ENCODE measurements at regions of chr6 and their contacts with region 1.

Region 1: GRCh38 chr6:138588805-138589434 is 89.6 kb upstream of the NHSL1 start:
- DNase-seq: peak; percentile 39
- H3K4me3 Mint-ChIP-seq: no peak overlapping the region
- H3K27ac Mint-ChIP-seq: no peak overlapping the region
- H3K4me1 Mint-ChIP-seq: peaks cover 27% of the 10 kb centered on the region
- H3K27me3 Mint-ChIP-seq: peaks cover 5% of the 10 kb centered on the region

Region 2: GRCh38 chr6:138115877-138116660 is 472.9 kb before region 1 on chr6:
- intact Hi-C with region 1: loop called (anchors 1 kb)
- DNase-seq: peak; percentile 11
- H3K4me3 Mint-ChIP-seq: no peak overlapping the region
- H3K27ac Mint-ChIP-seq: no peak overlapping the region
- H3K4me1 Mint-ChIP-seq: peaks cover 10% of the 10 kb centered on the region
- H3K27me3 Mint-ChIP-seq: peaks cover 45% of the 10 kb centered on the region

Region 3: DNA sequence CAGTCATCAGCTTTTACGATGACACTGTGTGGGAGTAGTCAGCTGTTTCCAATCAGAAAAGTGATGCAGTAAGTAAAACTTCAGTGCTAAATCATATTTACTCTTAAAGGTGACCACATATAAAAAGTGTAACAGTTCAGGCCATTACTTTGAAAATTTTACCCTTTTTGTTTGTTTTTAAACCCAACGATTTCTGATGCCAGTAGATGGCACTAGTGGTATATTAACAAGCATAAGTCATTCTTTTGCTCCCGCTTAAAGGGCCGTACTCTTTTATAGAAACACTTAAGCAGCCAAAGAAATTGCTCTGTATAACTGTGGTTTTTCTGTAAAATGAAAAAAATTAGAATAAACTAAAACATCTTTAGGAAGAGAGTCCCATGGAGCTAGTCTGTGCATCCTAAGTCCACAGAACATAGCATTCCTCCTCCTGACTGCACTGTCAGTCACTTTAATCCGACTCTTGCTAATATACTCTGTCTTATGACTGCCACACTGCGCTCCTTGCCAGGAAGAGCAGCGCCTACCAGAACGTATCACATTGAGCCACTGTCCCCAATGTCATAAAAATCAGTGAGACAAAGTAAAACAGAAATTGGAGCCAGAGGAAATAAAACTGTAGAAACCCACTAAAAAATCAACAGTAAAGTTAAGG is 159.8 kb before region 1 on chr6:
- intact Hi-C with region 1: loop called (anchors 2 kb)
- DNase-seq: no peak
- H3K4me3 Mint-ChIP-seq: no peak overlapping the region
- H3K27ac Mint-ChIP-seq: no peak overlapping the region
- H3K4me1 Mint-ChIP-seq: peaks cover 5% of the 10 kb centered on the region
- H3K27me3 Mint-ChIP-seq: peaks cover 1% of the 10 kb centered on the region

Region 4: DNA sequence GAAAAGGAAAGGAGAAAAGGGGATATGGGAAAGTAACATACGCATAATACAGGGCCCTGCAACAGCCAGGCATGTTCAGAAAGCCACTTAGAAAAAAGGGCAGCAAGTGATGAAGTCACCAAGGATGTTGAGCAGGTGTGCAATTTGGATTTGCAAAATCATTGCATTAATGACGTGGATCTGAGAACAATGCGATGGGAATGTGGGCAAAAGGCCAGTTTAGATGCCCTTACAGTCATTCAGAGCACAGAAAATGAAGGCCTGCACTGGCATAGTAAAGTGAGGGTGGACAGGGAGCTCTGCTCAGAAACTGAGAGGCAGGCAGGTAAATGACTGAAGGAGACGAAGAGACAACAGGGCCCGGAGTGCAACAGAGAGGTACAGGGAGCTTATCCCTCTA is 34.0 kb after region 1 on chr6:
- intact Hi-C with region 1: no loop called
- DNase-seq: no peak
- H3K4me3 Mint-ChIP-seq: no peak overlapping the region
- H3K27ac Mint-ChIP-seq: no peak overlapping the region
- H3K4me1 Mint-ChIP-seq: no peaks in the 10 kb centered on the region
- H3K27me3 Mint-ChIP-seq: peaks cover 6% of the 10 kb centered on the region

Region 5: GRCh38 chr6:138654715-138655634 is 66.1 kb after region 1 on chr6:
- intact Hi-C with region 1: loop called (anchors 1 kb)
- DNase-seq: no peak
- H3K4me3 Mint-ChIP-seq: no peak overlapping the region
- H3K27ac Mint-ChIP-seq: no peak overlapping the region
- H3K4me1 Mint-ChIP-seq: peaks cover 20% of the 10 kb centered on the region
- H3K27me3 Mint-ChIP-seq: peaks cover 22% of the 10 kb centered on the region

Region 6: GRCh38 chr6:138765896-138766655 is 177.2 kb after region 1 on chr6:
- intact Hi-C with region 1: loop called (anchors 1 kb)
- DNase-seq: no peak
- H3K4me3 Mint-ChIP-seq: no peak overlapping the region
- H3K27ac Mint-ChIP-seq: no peak overlapping the region
- H3K4me1 Mint-ChIP-seq: peaks cover 9% of the 10 kb centered on the region
- H3K27me3 Mint-ChIP-seq: no peaks in the 10 kb centered on the region

Region 7: GRCh38 chr6:138987640-138988468 is 398.9 kb after region 1 on chr6 and contains the start of gene REPS1:
- intact Hi-C with region 1: loop called (anchors 1 kb)
- DNase-seq: peak; percentile 88
- H3K4me3 Mint-ChIP-seq: peak within 1 kb of the TSS; percentile 89
- H3K27ac Mint-ChIP-seq: peak within 1 kb of the TSS; percentile 92
- H3K4me1 Mint-ChIP-seq: peaks cover 7% of the 10 kb centered on the region
- H3K27me3 Mint-ChIP-seq: no peaks in the 10 kb centered on the region
- total RNA-seq, gene REPS1: 69.6 and 74.6 TPM in 2 replicates

Region 8: DNA sequence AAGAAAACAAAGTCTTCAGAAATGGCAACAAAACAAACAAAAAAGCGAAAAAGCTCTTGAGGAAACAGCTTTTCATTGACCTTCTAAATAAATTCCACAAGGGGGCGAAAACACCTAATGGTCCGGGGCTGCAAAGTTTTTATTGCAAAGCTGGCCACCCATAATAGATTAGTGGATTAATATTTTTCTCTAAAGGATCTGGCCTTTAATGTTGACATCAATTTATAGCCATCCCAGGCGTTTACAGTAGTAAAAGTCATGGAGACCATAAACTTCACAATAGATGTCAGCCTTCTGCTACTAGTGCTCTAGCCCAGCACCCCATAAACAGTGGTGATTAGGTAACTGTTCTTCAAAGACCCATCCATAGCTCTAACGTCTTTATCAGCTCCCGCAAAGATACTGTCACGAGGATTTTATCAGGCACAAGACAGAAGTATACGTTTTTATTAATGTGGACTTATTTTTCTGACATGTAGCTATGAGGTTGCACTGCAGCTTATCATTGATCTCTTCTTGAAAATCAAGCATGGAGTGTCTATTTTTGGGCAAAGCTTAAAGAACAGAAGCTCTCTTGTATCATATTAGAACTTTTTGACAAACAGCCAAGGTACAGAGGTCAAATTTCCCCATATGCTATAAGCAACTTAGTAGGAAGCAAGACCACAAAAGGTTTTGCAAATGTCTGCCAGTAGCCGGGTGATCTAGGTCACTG is 780.8 kb after region 1 on chr6:
- intact Hi-C with region 1: loop called (anchors 1 kb)
- DNase-seq: no peak
- H3K4me3 Mint-ChIP-seq: no peak overlapping the region
- H3K27ac Mint-ChIP-seq: no peak overlapping the region
- H3K4me1 Mint-ChIP-seq: peaks cover 36% of the 10 kb centered on the region
- H3K27me3 Mint-ChIP-seq: peaks cover 2% of the 10 kb centered on the region